ENCODE measurements at regions of chr14 and their contacts with region 1.

Region 1: DNA sequence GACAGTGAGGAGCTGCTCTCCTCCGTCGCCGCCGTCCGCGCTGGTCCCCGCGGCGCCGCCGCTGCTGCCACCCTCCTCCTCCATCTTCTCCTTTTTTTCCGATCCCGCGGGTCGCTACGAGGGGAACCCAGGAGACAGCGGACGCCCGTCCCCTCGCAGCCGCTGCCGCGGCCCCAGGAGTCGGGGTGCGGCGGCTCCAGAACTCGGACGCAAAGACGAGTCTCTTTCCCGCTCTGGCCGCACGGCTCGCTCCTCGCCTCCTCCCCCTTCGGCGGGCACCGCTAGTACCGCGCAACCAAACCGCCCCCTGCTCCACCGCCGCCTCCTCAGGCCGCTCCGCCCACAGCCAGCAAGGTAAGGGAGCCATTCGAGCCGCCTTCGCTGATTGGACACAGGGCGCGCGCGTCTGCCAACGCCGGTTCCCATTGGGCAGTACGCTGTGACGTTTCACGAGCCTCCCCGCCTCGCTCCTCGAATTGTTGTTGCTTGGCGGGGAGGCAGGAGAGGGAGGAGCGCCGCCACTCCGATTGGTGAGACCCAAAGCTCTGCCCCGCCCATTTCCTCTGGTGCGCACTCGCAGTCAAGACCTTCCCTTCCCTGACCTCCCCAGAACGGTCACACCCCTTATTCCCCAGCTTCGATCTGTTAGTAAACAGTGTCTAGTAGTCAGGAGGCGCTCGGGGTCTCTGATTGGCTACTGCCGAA is at the start of gene RPS6KA5:
- DNase-seq: peak; percentile 100
- ATAC-seq: peak; percentile 93 to 96 (median 94)
- H3K4me3 ChIP-seq: peak within 1 kb of the TSS; percentile 83
- H3K27ac ChIP-seq: peak within 1 kb of the TSS; percentile 94
- H3K4me1 ChIP-seq: peaks cover 21% of the 10 kb centered on the region
- H3K27me3 ChIP-seq: no peaks in the 10 kb centered on the region
- CTCF ChIP-seq: peak; percentile 30
- total RNA-seq, gene RPS6KA5: 11.5 to 20.0 (median 15.8) TPM

Region 2: GRCh38 chr14:90903101-90903500 is 157.4 kb before region 1 on chr14:
- intact Hi-C with region 1: loop called in 1 of 2 experiments (anchors 10 kb)
- DNase-seq: peak in 1 of 2 donors; percentile 26
- ATAC-seq: peak; percentile 58 to 94 (median 86)
- H3K4me3 ChIP-seq: no peak overlapping the region
- H3K27ac ChIP-seq: no peak overlapping the region
- H3K4me1 ChIP-seq: no peaks in the 10 kb centered on the region
- H3K27me3 ChIP-seq: no peaks in the 10 kb centered on the region
- CTCF ChIP-seq: peak; percentile 72

Region 3: DNA sequence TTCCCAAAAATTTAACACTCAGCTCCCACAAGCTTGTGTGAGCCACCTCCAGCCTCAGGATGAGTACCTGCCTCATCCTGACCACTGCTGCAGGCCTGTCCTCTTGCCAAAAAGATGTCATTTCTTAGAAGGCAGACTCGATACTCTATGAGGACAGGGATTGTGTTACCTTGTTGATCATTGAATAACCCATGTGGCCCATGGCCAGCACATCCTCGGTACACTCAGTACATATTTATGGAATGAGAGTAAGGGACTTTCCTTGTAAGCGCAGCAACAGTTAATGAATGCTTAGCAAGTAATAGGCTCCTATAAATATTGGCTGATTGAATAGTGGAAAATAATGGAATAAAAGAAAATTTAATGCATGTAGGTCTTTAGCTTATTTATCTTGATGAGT is 38.1 kb after region 1 on chr14:
- intact Hi-C with region 1: loop called in 1 of 2 experiments (anchors 5 kb)
- DNase-seq: peak; percentile 20 to 69
- ATAC-seq: peak; percentile 10 to 48 (median 36)
- H3K4me3 ChIP-seq: no peak overlapping the region
- H3K27ac ChIP-seq: peak overlapping the region; percentile 67
- H3K4me1 ChIP-seq: peaks cover 15% of the 10 kb centered on the region
- H3K27me3 ChIP-seq: no peaks in the 10 kb centered on the region
- CTCF ChIP-seq: no peak

Region 4: GRCh38 chr14:91138511-91139359 is 78.2 kb after region 1 on chr14:
- intact Hi-C with region 1: loop called in 1 of 2 experiments (anchors 5 kb)
- DNase-seq: no peak
- ATAC-seq: peak; percentile 60 to 76 (median 68)
- H3K4me3 ChIP-seq: no peak overlapping the region
- H3K27ac ChIP-seq: peak overlapping the region; percentile 15
- H3K4me1 ChIP-seq: peaks cover 20% of the 10 kb centered on the region
- H3K27me3 ChIP-seq: no peaks in the 10 kb centered on the region
- CTCF ChIP-seq: peak; percentile 53

Region 5: DNA sequence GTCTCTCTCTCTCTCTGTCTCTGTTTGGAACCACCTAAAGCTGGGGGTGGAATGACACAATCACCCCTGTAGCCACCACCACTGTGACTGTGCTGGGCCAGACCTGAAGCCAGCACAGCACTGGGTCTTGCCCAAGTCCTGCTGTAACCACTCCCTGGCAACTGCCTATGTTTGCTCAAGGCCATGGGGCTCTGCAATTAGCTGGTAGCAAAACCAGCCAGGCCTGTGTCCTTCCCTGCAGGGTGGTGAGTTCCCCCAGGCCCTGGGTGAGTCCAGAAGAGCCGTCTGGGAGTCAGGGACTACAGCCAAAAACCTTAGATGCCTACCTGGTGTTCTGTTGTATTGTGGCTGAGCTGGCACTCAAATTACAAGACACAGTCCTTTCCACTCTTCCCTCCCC is 104.2 kb after region 1 on chr14:
- intact Hi-C with region 1: loop called in 1 of 2 experiments (anchors 5 kb)
- DNase-seq: peak; percentile 72 to 78
- ATAC-seq: peak; percentile 14 to 75 (median 60)
- H3K4me3 ChIP-seq: no peak overlapping the region
- H3K27ac ChIP-seq: peak overlapping the region; percentile 81
- H3K4me1 ChIP-seq: peaks cover 58% of the 10 kb centered on the region
- H3K27me3 ChIP-seq: no peaks in the 10 kb centered on the region
- CTCF ChIP-seq: no peak

Region 6: GRCh38 chr14:91177073-91178034 is 116.9 kb after region 1 on chr14:
- intact Hi-C with region 1: loop called in 1 of 2 experiments (anchors 2 kb)
- DNase-seq: peak; percentile 44 to 61
- ATAC-seq: peak; percentile 29 to 59 (median 46)
- H3K4me3 ChIP-seq: no peak overlapping the region
- H3K27ac ChIP-seq: no peak overlapping the region
- H3K4me1 ChIP-seq: peaks cover under 1% of the 10 kb centered on the region
- H3K27me3 ChIP-seq: no peaks in the 10 kb centered on the region
- CTCF ChIP-seq: peak; percentile 70

Measured in psoas muscle (tissue), 8 donors.